Thyroid gland (tissue), 4 donors: ENCODE measurements at regions of chr3 and their contacts with region 1.

Region 1: GRCh38 chr3:125148836-125149235 is 63.7 kb downstream of the SLC12A8 start:
- DNase-seq: peak; percentile 73 to 84
- H3K4me3 ChIP-seq: no peak overlapping the region
- H3K27ac ChIP-seq: peak overlapping the region; percentile 8 to 74 (median 62)
- H3K4me1 ChIP-seq: peaks cover 69 to 72% of the 10 kb centered on the region in 2 donors
- H3K27me3 ChIP-seq: no peaks in the 10 kb centered on the region
- CTCF ChIP-seq: no peak
- POLR2A ChIP-seq: peak in 1 of 2 donors; percentile 35

Region 2: GRCh38 chr3:125062888-125063618 is 85.8 kb before region 1 on chr3:
- intact Hi-C with region 1: loop called (anchors 5 kb)
- DNase-seq: peak; percentile 72 to 80
- H3K4me3 ChIP-seq: no peak overlapping the region
- H3K27ac ChIP-seq: peak overlapping the region; percentile 50 to 87 (median 81)
- H3K4me1 ChIP-seq: peaks cover 26 to 36% of the 10 kb centered on the region in 2 donors
- H3K27me3 ChIP-seq: no peaks in the 10 kb centered on the region
- CTCF ChIP-seq: no peak
- POLR2A ChIP-seq: no peak